ENCODE measurements at regions of chr17 and their contacts with region 1.

Region 1: DNA sequence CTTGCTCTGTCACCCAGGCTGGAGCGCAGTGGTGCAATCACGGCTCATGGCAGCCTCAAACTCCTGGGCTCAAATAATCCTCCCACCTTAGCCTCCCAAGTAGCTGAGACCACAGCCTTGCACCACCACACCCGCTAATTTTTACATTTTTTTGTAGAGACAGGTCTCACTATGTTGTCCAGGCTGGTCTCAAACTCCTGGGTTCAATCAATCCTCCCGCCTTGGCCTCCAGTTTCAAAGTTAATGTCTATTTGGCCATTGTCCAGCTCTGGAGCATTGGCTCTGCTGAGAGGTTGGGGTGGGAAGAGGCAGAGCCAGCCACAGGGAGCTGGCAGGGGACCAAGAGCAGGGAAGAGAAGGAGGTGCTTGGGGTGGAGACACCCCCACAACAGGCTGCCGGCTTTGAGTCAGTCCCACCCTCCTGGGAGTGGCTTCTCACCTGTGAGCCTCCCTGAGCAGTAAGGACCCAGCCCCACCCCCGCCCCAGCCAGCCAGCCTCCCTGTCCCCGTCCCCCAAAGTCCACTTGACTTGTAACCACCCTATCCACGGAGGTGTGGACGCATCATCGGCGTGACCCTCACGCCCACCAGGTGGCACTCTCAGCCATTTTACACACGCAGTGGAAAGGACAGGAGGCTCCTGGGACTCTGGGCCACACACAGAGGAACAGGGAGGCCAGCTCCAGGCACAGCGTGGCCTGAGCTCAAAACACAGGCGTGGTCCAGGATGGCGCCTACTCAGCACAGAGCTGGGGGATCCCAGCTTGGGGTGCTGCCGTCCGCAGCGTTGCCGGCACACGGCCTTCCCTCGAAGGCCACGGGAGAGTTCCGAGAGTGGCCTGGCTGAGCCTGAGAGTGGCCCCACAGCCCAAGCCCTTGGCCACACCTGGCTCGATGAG is 22.8 kb upstream of the PVALEF start:
- DNase-seq: peak; percentile 96
- H3K4me3 ChIP-seq: no peak overlapping the region; a peak in 1 of 4 replicates
- H3K27ac ChIP-seq: no peak overlapping the region
- H3K4me1 ChIP-seq: peaks cover 0 to 3% of the 10 kb centered on the region in 2 experiments; a peak in 1 of 4 replicates
- H3K27me3 ChIP-seq: no peaks in the 10 kb centered on the region
- CTCF ChIP-seq: peak; percentile 74
- EP300 ChIP-seq: no peak
- RAD21 ChIP-seq: peak; percentile 90

Region 2: DNA sequence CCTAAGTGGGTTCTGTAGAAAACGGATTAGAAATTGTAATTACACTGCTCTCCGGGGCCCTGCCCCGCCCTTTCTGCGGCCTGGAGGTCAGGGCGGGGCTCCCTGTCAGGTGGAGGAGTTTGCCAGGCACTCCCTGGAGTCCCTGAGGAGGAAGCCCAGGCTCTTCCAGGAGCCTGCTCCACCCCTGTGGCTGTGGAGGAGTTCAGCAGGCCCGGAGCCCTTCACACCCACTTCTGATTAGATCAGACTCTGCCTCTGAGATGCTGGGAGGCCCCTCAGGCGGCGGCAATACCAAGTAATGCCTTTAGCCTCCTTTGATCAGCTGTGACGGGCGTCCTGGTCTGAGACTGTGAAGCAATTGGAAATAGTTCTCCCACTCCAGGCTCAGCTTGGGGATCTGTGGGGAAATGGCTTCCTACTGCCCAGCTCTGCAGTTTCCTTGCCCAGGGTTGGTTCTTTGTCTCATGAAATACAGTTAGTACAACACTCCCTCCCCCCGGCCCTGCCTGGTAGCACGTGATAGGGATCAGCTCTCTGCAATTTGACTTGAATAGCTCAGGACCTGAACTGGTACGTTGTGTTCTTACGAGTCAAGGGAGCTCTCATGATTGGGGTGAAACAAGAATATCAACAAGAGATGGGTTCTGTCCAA is 85.3 kb before region 1 on chr17:
- CTCF ChIA-PET with region 1: no interaction called
- POLR2A ChIA-PET with region 1: no interaction called
- DNase-seq: peak; percentile 84
- H3K4me3 ChIP-seq: no peak overlapping the region
- H3K27ac ChIP-seq: peak overlapping the region in 1 of 2 experiments; percentile 45; a peak in 2 of 4 replicates
- H3K4me1 ChIP-seq: peaks cover 9 to 24% of the 10 kb centered on the region in 2 experiments; a peak in 1 of 4 replicates
- H3K27me3 ChIP-seq: no peaks in the 10 kb centered on the region
- CTCF ChIP-seq: no peak
- EP300 ChIP-seq: no peak
- RAD21 ChIP-seq: peak; percentile 35; the same call in 1 of the 2 replicates

Region 3: DNA sequence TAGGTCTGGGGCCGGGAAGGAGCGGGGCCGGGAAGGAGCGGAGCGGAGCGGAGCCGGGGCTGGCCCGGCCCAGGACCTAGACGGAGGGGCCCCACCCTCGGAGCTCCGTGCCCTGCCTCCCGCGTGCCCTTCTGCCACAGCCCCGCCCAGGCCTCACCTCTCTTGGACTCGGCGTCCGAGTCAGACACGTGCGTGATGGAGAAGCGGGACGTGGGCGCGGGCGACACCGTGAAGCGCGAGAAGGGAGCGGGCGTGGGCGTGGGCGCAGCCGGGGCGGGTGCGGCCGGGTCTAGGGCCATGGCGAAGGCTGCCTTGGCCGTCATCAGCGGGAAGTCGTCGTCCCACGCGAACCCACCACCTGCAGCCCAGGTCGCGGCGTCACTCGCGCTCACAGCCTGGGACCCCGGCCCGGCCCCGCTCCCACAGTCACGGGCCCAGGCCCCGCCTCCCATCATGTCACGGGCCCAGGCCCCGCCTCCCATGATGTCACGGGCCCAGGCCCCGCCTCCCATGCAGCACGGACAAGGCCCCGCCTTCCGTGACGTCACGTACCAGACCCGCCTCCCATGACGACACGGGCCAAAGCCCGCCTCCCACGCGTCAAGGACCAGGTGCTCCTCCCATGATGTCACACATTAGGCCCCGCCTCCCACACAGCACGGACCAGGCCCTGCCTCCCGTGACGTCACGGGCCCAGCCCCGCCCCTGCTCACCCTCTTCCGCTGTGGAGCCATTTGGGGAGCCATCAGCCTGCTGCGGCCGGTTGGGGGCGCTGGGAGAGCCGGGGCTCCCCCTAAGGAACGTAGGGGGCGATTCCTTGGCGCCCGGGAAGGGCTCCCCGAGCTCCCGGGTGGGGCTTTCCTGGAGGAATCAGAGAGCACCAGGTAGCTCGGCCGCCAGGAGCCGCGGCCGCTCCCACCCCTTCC is 23.1 kb before region 1 on chr17:
- CTCF ChIA-PET with region 1: interaction called, 21 read pairs
- POLR2A ChIA-PET with region 1: no interaction called
- DNase-seq: peak; percentile 96
- H3K4me3 ChIP-seq: no peak overlapping the region
- H3K27ac ChIP-seq: no peak overlapping the region
- H3K4me1 ChIP-seq: peaks cover 0 to 29% of the 10 kb centered on the region in 2 experiments; a peak in 1 of 4 replicates
- H3K27me3 ChIP-seq: no peaks in the 10 kb centered on the region
- CTCF ChIP-seq: no peak
- EP300 ChIP-seq: no peak
- RAD21 ChIP-seq: no peak

Region 4: GRCh38 chr17:81159611-81160265 is 17.2 kb after region 1 on chr17:
- CTCF ChIA-PET with region 1: interaction called, 61 read pairs
- POLR2A ChIA-PET with region 1: no interaction called
- DNase-seq: no peak
- H3K4me3 ChIP-seq: no peak overlapping the region
- H3K27ac ChIP-seq: no peak overlapping the region
- H3K4me1 ChIP-seq: peaks cover 0 to 12% of the 10 kb centered on the region in 2 experiments; a peak in 1 of 4 replicates
- H3K27me3 ChIP-seq: 0 out of 2 replicates have a peak, but pooled peaks cover under 1% of the 10 kb centered on the region
- CTCF ChIP-seq: no peak
- EP300 ChIP-seq: no peak
- RAD21 ChIP-seq: no peak

Region 5: DNA sequence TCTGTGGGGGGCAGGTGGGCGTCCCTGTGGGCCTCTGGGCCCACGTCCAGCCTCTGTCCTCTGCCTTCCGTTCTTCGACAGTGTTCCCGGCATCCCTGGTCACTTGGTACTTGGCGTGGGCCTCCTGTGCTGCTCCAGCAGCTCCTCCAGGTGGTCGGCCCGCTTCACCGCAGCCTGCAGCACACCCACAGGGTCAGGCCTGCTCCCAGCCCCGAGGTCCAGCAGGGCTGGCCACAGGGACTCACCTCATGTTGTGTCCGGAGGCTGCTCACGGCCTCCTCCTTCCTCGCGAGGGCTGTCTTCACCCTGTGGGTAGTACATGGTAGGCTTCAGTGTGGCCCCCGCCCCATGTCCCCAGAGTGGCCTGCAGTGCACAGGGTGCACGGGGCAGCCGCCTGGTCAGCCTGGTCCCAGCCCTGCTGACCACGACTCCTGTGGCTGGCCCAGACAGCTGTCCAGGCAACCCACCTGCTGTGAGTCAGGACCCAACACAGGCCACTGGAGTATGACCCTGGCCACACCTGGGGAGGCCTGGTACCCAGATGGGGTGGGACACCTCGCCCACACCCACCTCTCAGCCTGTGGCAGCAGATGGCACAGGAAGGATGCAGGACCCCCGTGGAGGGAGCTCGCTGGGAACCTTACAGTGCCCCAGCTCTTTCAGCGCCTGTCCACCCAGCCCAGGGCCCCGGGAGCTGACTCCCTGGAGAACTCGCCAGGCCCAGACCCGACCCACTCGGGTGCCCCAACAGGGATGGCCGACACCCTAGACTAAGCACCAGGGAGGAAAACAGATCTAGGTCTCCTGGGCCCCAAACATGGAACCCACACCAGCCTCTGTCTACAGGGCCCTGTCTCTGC is 47.4 kb after region 1 on chr17:
- CTCF ChIA-PET with region 1: interaction called, 46 read pairs
- POLR2A ChIA-PET with region 1: no interaction called
- DNase-seq: peak; percentile 74
- H3K4me3 ChIP-seq: no peak overlapping the region
- H3K27ac ChIP-seq: no peak overlapping the region
- H3K4me1 ChIP-seq: no peaks in the 10 kb centered on the region; a peak in 1 of 4 replicates
- H3K27me3 ChIP-seq: no peaks in the 10 kb centered on the region
- CTCF ChIP-seq: peak; percentile 14; the same call in 1 of the 2 replicates
- EP300 ChIP-seq: no peak
- RAD21 ChIP-seq: peak; percentile 58

Region 6: DNA sequence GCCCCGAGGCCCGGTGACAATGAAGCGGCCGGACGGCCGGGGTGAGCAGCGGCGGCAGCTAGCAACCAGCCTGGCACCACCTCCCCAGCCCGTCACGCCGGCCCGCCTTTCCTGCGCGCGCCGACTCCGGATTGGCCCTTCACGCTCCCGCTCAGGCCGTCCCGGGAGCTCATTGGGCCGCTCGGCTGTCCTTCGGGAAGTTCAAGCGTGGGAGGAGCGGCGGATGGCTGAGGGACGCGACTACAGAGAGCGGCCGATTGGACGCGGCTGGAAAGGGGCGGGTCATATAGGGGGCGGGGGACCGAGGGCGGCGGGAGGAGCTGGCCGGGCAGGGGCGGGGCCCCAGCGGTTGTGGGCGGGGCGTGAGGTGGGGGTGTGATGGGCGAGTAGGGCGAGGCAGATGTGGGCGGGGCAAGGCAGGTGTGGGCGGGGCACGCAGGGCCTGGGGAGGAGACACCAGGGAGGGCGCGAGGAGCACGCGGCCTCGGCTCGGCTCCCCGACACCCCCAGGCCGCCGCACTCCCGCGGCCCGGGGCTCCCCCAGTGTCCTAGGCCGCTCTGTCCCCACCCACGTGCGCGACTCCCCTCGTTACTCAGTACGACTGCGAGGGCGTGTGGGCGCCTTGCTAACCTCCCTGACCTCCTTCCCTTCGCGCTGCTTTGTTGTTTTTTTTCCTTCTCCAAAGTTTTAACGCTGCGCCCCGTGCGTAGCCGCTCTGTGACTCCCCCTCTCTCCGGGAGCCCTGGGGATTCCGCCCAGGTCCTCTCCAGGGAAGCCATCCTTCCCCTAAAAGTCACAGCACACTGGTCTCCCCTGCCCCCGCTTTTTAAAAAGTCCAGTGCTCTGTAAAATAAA is 80.6 kb after region 1 on chr17 and contains the start of gene CEP131:
- CTCF ChIA-PET with region 1: interaction called, 15 read pairs
- POLR2A ChIA-PET with region 1: no interaction called
- DNase-seq: peak; percentile 100
- H3K4me3 ChIP-seq: peak within 1 kb of the TSS; percentile 76 to 94
- H3K27ac ChIP-seq: peak within 1 kb of the TSS in 1 of 2 experiments; percentile 24; a peak in 1 of 4 replicates
- H3K4me1 ChIP-seq: peaks cover 7 to 16% of the 10 kb centered on the region in 2 experiments; a peak in 3 of 4 replicates
- H3K27me3 ChIP-seq: no peaks in the 10 kb centered on the region
- CTCF ChIP-seq: no peak
- EP300 ChIP-seq: no peak
- RAD21 ChIP-seq: no peak
- polyA plus RNA-seq, gene CEP131: 26.5 and 34.8 TPM in 2 replicates

Region 7: DNA sequence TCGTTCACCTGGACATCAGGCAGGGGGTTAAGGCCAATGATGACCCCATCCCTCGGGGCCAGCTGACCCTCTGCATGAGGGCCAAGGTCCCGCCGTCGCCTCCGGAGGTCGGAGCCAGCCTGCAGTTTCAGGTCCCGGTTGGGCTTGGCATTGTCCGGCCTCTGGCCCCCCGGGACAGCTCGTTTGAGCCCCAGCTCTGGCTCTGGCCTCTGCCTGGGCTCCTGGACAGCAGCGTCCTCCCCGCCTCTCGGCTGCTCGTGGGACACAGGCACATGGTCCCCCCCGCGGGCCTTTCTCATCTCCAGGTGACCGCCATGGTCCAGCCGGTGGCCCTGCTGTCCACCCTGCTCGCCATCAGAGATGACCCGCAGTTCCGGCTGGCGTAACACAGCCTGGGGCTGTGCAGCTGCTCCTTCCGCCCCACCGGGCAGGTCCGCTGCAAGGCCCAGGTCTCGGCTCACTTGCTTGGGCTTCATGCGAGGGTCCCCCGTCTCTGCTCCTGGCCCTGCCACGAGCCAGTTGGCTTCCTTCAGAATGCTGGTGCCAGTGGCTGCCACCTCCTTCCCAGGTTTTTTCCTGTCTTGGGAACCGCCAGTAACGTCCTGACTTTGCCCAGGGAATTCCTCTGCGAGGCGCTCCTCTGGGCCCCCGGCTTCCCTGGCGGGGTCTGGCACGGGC is 103.3 kb after region 1 on chr17:
- CTCF ChIA-PET with region 1: interaction called, 133 read pairs
- POLR2A ChIA-PET with region 1: no interaction called
- DNase-seq: no peak
- H3K4me3 ChIP-seq: no peak overlapping the region
- H3K27ac ChIP-seq: peak overlapping the region in 1 of 2 experiments; percentile 62; a peak in 1 of 4 replicates
- H3K4me1 ChIP-seq: peaks cover 0 to 36% of the 10 kb centered on the region in 2 experiments; a peak in 1 of 4 replicates
- H3K27me3 ChIP-seq: no peaks in the 10 kb centered on the region
- CTCF ChIP-seq: no peak
- EP300 ChIP-seq: no peak
- RAD21 ChIP-seq: no peak

Measured in SK-N-SH (cell line).